Naive thymus-derived CD4-positive, alpha-beta T cell (primary cell): ENCODE measurements at regions of chr7 and their contacts with region 1.

Region 1: GRCh38 chr7:91089382-91089963 is 174.8 kb upstream of the FZD1 start:
- DNase-seq: peak in 6 of 9 donors; percentile 33 to 52 (median 38)
- ATAC-seq: peak; percentile 78
- H3K4me3 ChIP-seq: no peak overlapping the region
- H3K4me3 Mint-ChIP-seq: peak overlapping the region; percentile 2 to 71 (median 43)
- H3K27ac ChIP-seq: no peak overlapping the region
- H3K27ac Mint-ChIP-seq: peak overlapping the region in 4 of 9 donors; percentile 0 to 29 (median 12)
- H3K4me1 ChIP-seq: peaks cover 0 to 12% of the 10 kb centered on the region in 2 donors
- H3K4me1 Mint-ChIP-seq: peaks cover 14 to 36% (median 29%) of the 10 kb centered on the region in 7 donors
- H3K27me3 ChIP-seq: no peaks in the 10 kb centered on the region
- H3K27me3 Mint-ChIP-seq: peaks cover 0 to 9% (median 0%) of the 10 kb centered on the region in 5 donors

Region 2: GRCh38 chr7:91264046-91264923 is 174.8 kb after region 1 on chr7 and contains the start of gene FZD1:
- CTCF ChIA-PET with region 1: no interaction called
- POLR2A ChIA-PET with region 1: no interaction called
- intact Hi-C with region 1: loop called (anchors 10 kb)
- DNase-seq: peak in 8 of 9 donors; percentile 7 to 77 (median 44)
- ATAC-seq: peak; percentile 89
- H3K4me3 ChIP-seq: peak within 1 kb of the TSS; percentile 47
- H3K4me3 Mint-ChIP-seq: peak within 1 kb of the TSS; percentile 87 to 96 (median 92)
- H3K27ac ChIP-seq: no peak within 1 kb of the TSS
- H3K27ac Mint-ChIP-seq: peak within 1 kb of the TSS in 3 of 9 donors; percentile 42 to 75 (median 63)
- H3K4me1 ChIP-seq: peaks cover 0 to 9% of the 10 kb centered on the region in 2 donors
- H3K4me1 Mint-ChIP-seq: peaks cover 0 to 26% (median 12%) of the 10 kb centered on the region in 7 donors
- H3K27me3 ChIP-seq: no peaks in the 10 kb centered on the region
- H3K27me3 Mint-ChIP-seq: peaks cover 16 to 60% (median 41%) of the 10 kb centered on the region in 5 donors
- total RNA-seq, gene FZD1: 0.24 to 3.4 (median 0.64) TPM

Region 3: GRCh38 chr7:91636129-91636724 is 546.8 kb after region 1 on chr7:
- CTCF ChIA-PET with region 1: no interaction called
- POLR2A ChIA-PET with region 1: no interaction called
- intact Hi-C with region 1: loop called (anchors 1 to 5 kb)
- DNase-seq: peak in 3 of 9 donors; percentile 6 to 19 (median 16)
- ATAC-seq: peak; percentile 16
- H3K4me3 ChIP-seq: no peak overlapping the region
- H3K4me3 Mint-ChIP-seq: no peak overlapping the region
- H3K27ac ChIP-seq: no peak overlapping the region
- H3K27ac Mint-ChIP-seq: no peak overlapping the region
- H3K4me1 ChIP-seq: no peaks in the 10 kb centered on the region
- H3K4me1 Mint-ChIP-seq: peaks cover 0 to 2% (median 0%) of the 10 kb centered on the region in 7 donors
- H3K27me3 ChIP-seq: no peaks in the 10 kb centered on the region
- H3K27me3 Mint-ChIP-seq: no peaks in the 10 kb centered on the region

Region 4: GRCh38 chr7:91784463-91784862 is 695.0 kb after region 1 on chr7:
- CTCF ChIA-PET with region 1: interaction called, 3 read pairs
- POLR2A ChIA-PET with region 1: no interaction called
- intact Hi-C with region 1: loop called in 1 of 2 experiments (anchors 10 kb)
- DNase-seq: no peak
- ATAC-seq: no peak
- H3K4me3 ChIP-seq: no peak overlapping the region
- H3K4me3 Mint-ChIP-seq: no peak overlapping the region
- H3K27ac ChIP-seq: no peak overlapping the region
- H3K27ac Mint-ChIP-seq: no peak overlapping the region
- H3K4me1 ChIP-seq: no peaks in the 10 kb centered on the region
- H3K4me1 Mint-ChIP-seq: no peaks in the 10 kb centered on the region
- H3K27me3 ChIP-seq: no peaks in the 10 kb centered on the region
- H3K27me3 Mint-ChIP-seq: peaks cover 0 to 8% (median under 1%) of the 10 kb centered on the region in 5 donors

Region 5: DNA sequence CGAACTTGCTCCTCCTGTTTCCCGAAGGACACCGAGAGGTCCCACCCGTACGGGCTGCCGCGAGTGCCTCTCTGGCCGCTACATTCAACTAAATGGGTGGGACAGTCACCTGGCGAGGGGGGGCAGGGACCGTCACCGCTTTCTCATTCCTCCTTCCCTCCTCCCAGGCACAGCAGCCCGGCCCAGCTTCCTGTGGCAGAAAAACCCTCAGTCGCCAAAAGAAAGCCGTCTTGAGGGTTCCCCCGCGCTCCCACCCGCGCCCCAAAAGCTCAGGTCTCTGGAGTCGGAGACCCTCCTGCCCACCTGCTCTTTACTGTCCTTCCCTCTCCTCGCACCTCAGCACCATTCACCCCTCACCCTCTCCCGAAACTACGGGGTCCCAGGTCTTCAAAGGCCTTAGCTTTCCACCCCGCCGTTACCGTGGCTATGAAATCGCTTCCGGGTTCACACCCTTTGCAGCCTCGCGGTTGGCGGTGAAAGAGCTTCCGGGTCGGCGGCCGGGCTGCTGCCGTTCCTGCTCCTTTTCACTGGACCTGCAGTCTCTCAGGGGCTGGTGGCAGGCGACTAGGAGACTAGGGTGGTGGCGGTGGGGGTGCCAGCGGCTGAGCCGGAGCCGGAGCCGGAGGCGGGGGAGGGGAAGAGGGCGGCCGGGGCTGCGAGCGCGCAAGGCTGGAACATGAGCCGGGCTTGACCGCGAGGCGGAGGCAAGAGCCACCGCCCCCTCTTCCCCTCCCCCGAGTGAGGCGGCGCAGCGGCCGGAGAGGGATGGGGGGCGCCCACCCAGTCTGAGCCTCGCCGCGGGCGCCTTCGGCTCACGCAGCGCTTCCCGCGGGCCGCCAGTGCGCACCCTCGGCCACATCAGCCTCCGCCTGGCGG is 1156.3 kb after region 1 on chr7 and contains the starts of genes ANKIB1 and KRIT1:
- CTCF ChIA-PET with region 1: no interaction called
- POLR2A ChIA-PET with region 1: no interaction called
- intact Hi-C with region 1: loop called in 1 of 2 experiments (anchors 5 kb)
- DNase-seq: peak; percentile 68 to 88 (median 86)
- ATAC-seq: peak; percentile 87
- H3K4me3 ChIP-seq: peak within 1 kb of the TSS; percentile 80
- H3K4me3 Mint-ChIP-seq: peak within 1 kb of the TSS; percentile 97 to 100 (median 98)
- H3K27ac ChIP-seq: peak within 1 kb of the TSS; percentile 92
- H3K27ac Mint-ChIP-seq: peak within 1 kb of the TSS; percentile 98 to 100 (median 100)
- H3K4me1 ChIP-seq: peaks cover 15 to 22% of the 10 kb centered on the region in 2 donors
- H3K4me1 Mint-ChIP-seq: peaks cover 30 to 64% (median 45%) of the 10 kb centered on the region in 7 donors
- H3K27me3 ChIP-seq: no peaks in the 10 kb centered on the region
- H3K27me3 Mint-ChIP-seq: no peaks in the 10 kb centered on the region
- total RNA-seq, gene ANKIB1: 54.8 to 98.6 (median 68.2) TPM
- total RNA-seq, gene KRIT1: 45.7 to 78.7 (median 48.6) TPM